Activated CD4-positive, alpha-beta T cell treated with anti-CD3 and anti-CD28 coated beads, Interleukin-2, amount 10 ng/mL, durations not matched to agents 24 days and 14 days (primary cell): ENCODE measurements at regions of chr4 and their contacts with region 1.

Region 1: DNA sequence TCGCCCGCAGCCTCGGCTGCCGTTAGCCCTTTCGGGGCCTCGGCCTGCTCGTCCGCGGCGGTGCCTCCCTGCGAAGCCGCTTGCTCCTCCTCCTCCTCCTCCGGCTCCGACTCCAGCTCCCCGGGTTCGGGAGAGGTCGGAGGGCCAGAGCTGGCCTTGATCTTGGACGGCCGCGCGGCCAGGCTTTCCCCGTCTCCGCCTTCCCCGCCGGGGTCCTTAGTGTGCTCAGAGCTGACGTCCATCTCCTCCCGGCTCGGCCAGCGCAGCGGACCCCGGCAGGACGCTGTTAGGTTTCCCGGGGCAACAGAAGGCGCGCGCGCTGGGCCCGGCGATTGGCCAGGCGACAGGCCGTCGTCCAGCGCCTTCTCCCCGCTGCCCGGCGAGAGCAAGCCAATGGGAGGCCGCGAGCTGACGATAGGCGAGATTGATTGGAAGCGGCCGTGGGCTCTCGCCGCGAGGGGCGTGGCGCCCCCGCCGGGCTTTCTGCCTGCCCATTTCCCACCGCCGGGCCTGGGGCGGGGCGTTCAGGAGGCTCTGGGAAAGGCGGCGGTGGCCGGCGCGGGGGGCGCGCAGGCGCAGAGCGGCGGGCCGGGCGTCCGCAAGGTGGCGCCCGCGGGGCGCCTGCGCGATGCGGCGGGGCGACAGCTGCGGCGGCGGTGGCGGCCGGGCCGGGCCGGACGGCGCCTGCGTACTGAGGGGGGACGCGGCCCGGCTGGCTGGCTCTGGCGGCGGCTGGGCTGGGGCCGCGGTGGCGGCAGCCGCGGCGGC is at the start of gene TADA2B:
- DNase-seq: peak; percentile 99
- H3K4me3 Mint-ChIP-seq: peak within 1 kb of the TSS; percentile 97
- H3K27ac Mint-ChIP-seq: peak within 1 kb of the TSS; percentile 89
- H3K4me1 Mint-ChIP-seq: peaks cover 41% of the 10 kb centered on the region
- H3K27me3 Mint-ChIP-seq: peaks cover 12% of the 10 kb centered on the region
- total RNA-seq, gene TADA2B: 12.9 and 13.3 TPM in 2 replicates

Region 2: GRCh38 chr4:6898763-6899162 is 144.1 kb before region 1 on chr4:
- intact Hi-C with region 1: loop called (anchors 5 kb)
- DNase-seq: no peak
- H3K4me3 Mint-ChIP-seq: peak overlapping the region; percentile 58
- H3K27ac Mint-ChIP-seq: peak overlapping the region; percentile 94
- H3K4me1 Mint-ChIP-seq: peaks cover 36% of the 10 kb centered on the region
- H3K27me3 Mint-ChIP-seq: no peaks in the 10 kb centered on the region

Region 3: DNA sequence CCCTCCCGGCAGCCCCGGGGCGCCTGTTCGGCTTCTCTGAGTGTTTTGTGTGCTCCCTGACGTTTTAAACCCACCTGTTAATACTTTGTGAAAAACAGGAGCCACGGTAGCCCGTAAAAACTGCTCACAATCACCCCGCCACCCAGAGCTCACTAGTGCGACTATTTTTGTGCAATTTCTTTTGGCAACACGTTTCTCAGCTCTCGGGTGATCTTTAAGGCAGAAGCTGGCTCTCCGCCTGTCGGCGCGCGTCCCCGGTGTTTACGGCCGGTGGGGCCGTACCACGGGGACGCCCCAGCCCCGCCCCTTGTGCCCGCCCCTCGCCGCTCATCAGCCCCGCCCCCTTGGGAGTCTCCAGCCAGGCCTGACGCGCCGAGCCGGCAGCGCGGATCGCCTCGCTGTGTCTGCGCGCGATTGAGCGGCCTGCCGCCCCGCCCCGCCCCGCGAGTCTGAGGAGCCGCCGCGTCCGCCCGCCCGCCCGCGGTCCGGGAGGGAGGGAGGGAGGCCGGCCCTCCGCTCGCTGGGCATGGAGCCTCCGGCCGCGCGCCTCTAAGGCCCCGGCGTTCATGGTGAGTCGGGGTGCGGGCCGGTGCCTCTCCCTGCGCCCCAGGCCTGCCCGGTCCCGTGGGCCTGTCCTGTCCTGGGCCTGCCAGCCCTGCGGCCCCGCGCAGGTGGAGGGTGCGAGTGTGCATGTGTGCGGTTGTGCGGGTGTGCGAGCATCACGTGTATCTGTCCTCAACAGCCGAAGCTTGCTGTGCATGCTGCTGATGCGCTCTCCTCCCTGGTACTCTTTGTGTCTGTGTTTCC is 55.9 kb before region 1 on chr4:
- intact Hi-C with region 1: loop called (anchors 1 kb)
- DNase-seq: peak; percentile 98
- H3K4me3 Mint-ChIP-seq: peak overlapping the region; percentile 96
- H3K27ac Mint-ChIP-seq: peak overlapping the region; percentile 95
- H3K4me1 Mint-ChIP-seq: peaks cover 72% of the 10 kb centered on the region
- H3K27me3 Mint-ChIP-seq: no peaks in the 10 kb centered on the region

Region 4: DNA sequence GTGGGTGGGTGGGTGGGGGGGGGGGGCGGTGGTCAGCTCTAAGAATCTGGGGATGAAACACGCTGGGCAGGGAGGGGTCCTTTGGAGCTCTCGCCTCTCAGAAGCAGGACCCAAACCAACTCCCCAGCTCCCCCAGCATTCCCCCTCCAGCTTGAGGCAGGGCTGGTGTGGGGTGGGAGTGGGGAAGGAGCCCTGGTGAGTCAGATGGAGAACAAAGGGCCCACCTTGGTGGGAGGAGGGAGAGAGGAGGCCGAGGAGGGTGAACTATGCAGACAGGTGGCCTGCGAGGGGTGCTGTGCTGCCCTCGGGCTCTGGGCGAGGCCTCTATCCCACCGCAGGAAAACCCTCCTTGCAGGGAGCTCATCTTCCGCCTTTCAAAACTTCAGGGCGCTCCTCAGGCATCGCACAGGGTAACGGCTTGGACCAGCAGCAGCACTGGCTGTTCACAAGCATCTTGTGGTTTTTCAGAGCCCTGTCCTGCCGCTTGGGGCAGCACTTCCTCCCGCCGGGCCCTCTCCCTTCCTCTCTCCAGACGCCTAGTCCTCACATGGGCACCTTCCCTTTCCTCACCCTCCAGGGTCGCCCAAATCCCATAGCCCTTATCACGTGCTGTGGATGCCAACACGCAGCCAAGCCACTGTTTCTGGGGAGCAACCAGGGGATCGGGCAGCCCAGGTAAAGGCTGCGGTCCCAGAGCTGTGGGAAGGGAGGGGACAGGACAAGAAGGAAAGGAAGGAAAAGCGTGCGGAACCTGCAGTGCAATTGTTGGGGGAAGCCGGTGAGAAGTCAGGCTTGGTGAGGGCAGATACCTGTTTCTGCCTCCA is 59.0 kb after region 1 on chr4:
- intact Hi-C with region 1: loop called (anchors 2 kb)
- DNase-seq: peak; percentile 85
- H3K4me3 Mint-ChIP-seq: peak overlapping the region; percentile 95
- H3K27ac Mint-ChIP-seq: peak overlapping the region; percentile 3
- H3K4me1 Mint-ChIP-seq: peaks cover 12% of the 10 kb centered on the region
- H3K27me3 Mint-ChIP-seq: peaks cover 22% of the 10 kb centered on the region

Region 5: DNA sequence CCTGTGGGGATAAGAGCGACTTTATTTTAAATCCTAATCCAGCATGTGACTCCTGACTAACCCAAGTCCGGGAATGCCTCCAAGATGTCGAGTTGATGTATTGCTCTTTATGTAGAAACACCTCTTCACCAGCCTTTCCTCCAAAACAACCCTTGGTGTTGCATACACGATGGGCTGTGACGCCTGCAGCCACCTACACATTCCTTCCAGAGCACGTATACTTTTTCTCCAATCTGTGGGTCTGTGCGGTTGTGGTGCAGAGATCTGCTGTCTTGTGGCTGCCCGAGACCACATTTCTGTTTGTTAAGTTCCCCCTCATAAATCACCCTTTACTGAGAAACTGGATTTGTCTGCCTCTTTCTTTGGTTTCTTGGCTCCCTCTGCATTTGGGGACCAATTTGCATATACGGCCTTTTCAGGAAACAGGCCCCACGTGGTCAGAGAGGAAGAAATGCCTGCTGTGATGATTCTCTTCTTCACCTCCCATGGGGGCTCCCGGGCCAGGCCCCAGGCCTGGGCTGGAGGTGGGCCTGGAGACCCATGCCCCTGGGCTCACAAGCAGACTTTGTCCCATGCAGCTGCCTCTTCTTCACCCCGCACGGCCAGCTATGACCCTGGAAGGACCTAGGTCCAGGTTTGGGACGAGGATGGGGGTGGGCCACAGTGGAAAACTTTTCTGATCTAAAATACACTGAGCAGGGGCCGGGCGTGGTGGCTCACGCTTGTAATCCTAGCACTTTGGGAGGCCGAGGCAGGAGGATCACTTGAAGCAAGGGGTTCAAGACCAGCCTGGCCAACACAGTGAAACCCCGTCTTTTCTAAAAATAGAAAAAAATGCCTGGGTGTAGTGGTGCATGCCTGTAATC is 918.1 kb after region 1 on chr4:
- intact Hi-C with region 1: no loop called
- DNase-seq: peak; percentile 91
- H3K4me3 Mint-ChIP-seq: peak overlapping the region; percentile 63
- H3K27ac Mint-ChIP-seq: peak overlapping the region; percentile 97
- H3K4me1 Mint-ChIP-seq: peaks cover 56% of the 10 kb centered on the region
- H3K27me3 Mint-ChIP-seq: peaks cover 5% of the 10 kb centered on the region